Heart left ventricle (tissue), 16 donors: ENCODE measurements at regions of chr19 and their contacts with region 1.

Region 1: DNA sequence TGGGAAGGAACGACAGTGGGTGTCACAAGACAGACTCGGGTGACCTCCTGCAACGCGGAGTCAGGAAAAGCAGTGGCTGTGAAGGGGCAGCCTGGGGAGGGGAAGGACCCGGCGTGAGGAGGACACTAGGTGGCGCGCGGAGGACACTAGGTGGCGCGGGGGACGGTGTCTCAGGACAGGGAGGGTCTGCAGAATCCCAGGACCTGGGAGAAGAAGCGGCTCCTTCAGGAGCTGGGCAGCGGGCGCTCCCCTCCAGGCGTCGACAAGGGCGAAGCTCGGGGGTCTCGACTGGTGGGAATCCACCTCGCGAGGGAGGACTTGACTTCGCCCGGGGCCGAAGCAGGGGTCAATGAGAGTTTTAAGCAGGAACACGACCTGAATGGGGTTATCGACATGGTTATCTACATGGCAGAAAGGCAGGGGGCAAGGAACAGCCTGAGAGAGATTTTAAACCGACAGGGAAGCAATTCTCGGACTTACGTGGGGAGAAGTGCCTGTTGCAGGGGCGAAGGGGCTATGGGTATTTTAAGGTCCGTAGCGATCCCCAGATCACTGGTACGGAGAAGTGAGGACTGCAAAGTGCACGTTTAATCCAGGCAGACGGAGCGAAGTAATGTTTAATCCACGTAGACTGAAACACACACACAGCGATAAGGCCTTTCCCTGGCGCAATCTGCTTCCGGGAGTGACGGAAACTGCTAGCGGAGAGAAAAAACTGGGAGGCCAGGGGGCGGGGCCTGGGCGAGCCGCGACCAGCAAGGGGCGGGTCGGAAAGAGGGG is at the start of gene ZNF616:
- DNase-seq: peak; percentile 93 to 99 (median 98)
- ATAC-seq: peak; percentile 93 to 97 (median 96)
- H3K4me3 ChIP-seq: peak within 1 kb of the TSS; percentile 60 to 93 (median 82)
- H3K27ac ChIP-seq: peak within 1 kb of the TSS; percentile 79 to 97 (median 92)
- H3K4me1 ChIP-seq: peaks cover 0 to 21% (median 14%) of the 10 kb centered on the region in 12 donors
- H3K27me3 ChIP-seq: no peaks in the 10 kb centered on the region
- CTCF ChIP-seq: peak; percentile 58 to 93 (median 84)
- POLR2A ChIP-seq: peak in 1 of 2 donors; percentile 68
- total RNA-seq, gene ZNF616: 1.8 to 10.0 (median 6.7) TPM

Region 2: DNA sequence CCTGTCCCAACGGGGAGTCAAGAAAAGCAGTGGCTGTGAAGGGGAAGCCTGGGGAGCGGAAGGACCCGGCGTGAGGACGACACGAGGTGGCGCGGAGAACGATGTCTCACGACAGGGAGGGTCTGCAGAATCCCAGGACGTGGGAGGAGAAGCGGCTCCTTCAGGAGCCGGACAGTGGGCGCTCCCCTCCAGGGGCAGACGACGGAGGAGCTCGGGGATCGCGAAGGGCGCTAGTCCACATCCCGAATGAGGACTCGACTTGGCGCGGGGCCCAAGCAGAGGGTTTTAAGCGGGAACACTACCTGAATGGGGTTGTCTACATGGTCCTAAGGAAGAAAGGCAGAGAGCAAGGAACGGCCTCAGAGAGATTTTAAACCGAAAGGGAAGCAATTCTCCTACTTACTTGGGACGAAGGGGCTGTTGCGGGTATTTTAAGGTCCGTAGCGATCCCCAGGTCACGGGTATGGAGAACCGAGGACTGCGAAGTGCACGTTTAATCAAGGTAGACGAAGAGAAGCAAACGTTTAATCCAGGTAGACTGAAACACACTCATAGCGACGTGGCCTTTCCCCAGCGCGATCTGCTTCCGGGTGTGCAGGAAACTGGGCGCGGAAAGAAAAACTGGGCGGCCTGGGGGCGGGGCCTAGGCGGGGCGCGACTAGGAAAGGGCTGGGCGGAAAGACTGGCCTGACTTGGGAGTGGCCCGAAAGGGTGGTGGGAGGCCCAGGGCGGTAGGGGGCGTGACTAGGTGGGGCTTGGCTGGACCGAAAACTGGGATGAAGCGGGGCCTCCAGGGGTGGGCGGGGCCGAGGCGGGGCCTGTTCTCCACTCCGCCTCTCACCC is 44.0 kb before region 1 on chr19 and contains the start of gene ZNF841:
- intact Hi-C with region 1: loop called in 1 of 10 experiments (anchors 5 kb)
- DNase-seq: peak; percentile 96 to 98 (median 97)
- ATAC-seq: peak; percentile 99 to 100 (median 100)
- H3K4me3 ChIP-seq: peak within 1 kb of the TSS; percentile 69 to 99 (median 82)
- H3K27ac ChIP-seq: peak within 1 kb of the TSS in 11 of 12 donors; percentile 31 to 87 (median 71)
- H3K4me1 ChIP-seq: peaks cover 0 to 24% (median 15%) of the 10 kb centered on the region in 12 donors
- H3K27me3 ChIP-seq: no peaks in the 10 kb centered on the region
- CTCF ChIP-seq: peak in 5 of 12 donors; percentile 6 to 48 (median 22)
- POLR2A ChIP-seq: peak in 1 of 2 donors; percentile 73
- total RNA-seq, gene ZNF841: 6.8 to 12.9 (median 8.5) TPM

Region 3: DNA sequence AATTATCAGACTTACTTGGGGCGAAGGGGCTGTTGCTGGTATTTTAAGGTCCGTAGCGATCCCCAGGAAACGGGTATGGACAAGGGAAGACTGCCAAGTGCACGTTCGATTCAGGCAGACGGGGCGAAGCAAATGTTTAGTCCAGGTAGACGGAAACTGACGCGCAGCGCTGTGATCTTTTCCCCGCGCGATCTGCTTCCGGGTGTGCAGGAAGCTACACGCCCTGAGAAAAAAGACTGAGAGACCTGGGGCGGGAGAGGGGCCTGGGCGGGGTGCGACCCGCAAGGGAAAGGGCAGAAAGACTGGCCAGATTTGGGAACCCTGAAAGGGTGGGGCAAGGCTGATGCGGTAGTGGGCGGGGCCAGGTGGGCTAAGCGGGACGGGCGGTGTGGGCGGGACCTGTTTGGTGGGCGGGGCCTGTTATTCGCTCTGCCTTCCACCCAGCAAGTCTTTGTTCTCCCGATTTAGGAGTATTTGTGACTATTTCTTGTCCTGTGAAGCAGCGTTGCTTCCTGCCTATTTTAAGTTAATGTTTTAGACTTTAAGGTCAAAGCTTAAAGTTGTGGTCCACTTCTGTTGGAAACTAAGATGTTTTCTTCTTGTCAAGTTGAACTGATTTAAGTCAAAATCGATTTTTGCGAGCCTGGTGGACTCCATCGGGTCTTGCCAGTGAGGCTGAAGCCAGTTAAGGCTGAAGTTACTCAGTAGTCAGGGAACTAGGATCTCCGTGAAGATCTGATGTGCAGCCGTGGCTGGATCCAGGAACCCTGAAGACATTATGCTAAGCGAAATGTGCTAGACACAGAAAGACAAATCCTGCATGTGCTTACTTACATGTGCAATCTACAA is 32.1 kb after region 1 on chr19 and contains the start of gene ZNF836:
- intact Hi-C with region 1: loop called in 3 of 10 experiments (anchors 2 to 5 kb)
- DNase-seq: peak; percentile 92 to 93 (median 93)
- ATAC-seq: peak; percentile 96 to 99 (median 98)
- H3K4me3 ChIP-seq: peak within 1 kb of the TSS; percentile 62 to 94 (median 83)
- H3K27ac ChIP-seq: peak within 1 kb of the TSS; percentile 28 to 92 (median 84)
- H3K4me1 ChIP-seq: peaks cover 0 to 19% (median 11%) of the 10 kb centered on the region in 12 donors
- H3K27me3 ChIP-seq: no peaks in the 10 kb centered on the region
- CTCF ChIP-seq: no peak
- POLR2A ChIP-seq: no peak
- total RNA-seq, gene ZNF836: 4.1 to 11.0 (median 7.3) TPM

Region 4: GRCh38 chr19:52189735-52190486 is 50.5 kb after region 1 on chr19 and contains the start of gene PPP2R1A:
- intact Hi-C with region 1: loop called in 9 of 10 experiments (anchors 1 to 10 kb)
- DNase-seq: peak; percentile 98 to 100 (median 100)
- ATAC-seq: peak; percentile 88 to 97 (median 94)
- H3K4me3 ChIP-seq: peak within 1 kb of the TSS; percentile 55 to 97 (median 90)
- H3K27ac ChIP-seq: peak within 1 kb of the TSS; percentile 95 to 100 (median 98)
- H3K4me1 ChIP-seq: peaks cover 14 to 54% (median 43%) of the 10 kb centered on the region in 12 donors
- H3K27me3 ChIP-seq: no peaks in the 10 kb centered on the region
- CTCF ChIP-seq: peak in 1 of 12 donors; percentile 6
- POLR2A ChIP-seq: peak; percentile 60 to 61
- total RNA-seq, gene PPP2R1A: 345 to 447 (median 370) TPM

Region 5: DNA sequence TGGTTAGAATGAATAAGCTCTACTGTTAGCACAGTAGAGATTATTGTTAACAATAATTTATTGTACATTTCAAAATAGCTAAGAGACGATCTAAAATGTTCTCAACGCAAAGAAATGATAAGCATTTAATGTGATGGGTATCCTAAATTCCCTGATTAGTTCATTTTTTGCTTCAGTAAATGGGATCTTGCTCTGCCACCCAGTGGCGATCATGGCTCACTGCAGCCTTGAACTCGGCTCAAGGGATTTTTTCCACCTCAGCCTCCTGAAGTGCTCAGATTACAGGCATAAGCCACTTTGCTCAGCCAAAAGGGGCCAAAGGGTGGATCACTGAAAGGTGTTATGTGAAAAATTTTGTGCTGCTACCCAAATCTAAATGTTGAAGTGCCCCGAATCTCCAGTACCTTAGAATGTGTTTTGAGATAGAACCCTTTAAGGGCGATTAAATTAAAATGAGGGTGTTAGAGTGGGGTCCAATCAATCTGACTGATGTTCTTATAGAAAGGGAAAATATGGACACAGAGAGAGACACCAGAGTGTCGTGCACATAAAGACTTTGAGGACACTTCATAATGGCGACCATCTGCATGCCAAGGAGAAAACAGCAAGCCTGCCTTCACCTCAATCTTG is 98.4 kb after region 1 on chr19:
- intact Hi-C with region 1: loop called (anchors 1 to 2 kb)
- DNase-seq: peak in 4 of 5 donors; percentile 37 to 61 (median 40)
- ATAC-seq: peak in 3 of 4 donors; percentile 62 to 69 (median 66)
- H3K4me3 ChIP-seq: no peak overlapping the region
- H3K27ac ChIP-seq: no peak overlapping the region
- H3K4me1 ChIP-seq: peaks cover 0 to 6% (median 0%) of the 10 kb centered on the region in 12 donors
- H3K27me3 ChIP-seq: no peaks in the 10 kb centered on the region
- CTCF ChIP-seq: peak; percentile 81 to 97 (median 92)
- POLR2A ChIP-seq: no peak

Region 6: GRCh38 chr19:52258426-52258825 is 119.0 kb after region 1 on chr19:
- intact Hi-C with region 1: no loop called
- DNase-seq: no peak
- ATAC-seq: no peak
- H3K4me3 ChIP-seq: no peak overlapping the region
- H3K27ac ChIP-seq: no peak overlapping the region
- H3K4me1 ChIP-seq: no peaks in the 10 kb centered on the region
- H3K27me3 ChIP-seq: no peaks in the 10 kb centered on the region
- CTCF ChIP-seq: no peak
- POLR2A ChIP-seq: no peak

Region 7: GRCh38 chr19:52748336-52748950 is 609.0 kb after region 1 on chr19:
- intact Hi-C with region 1: loop called in 1 of 10 experiments (anchors 2 kb)
- DNase-seq: no peak
- ATAC-seq: peak in 2 of 4 donors; percentile 46 to 56
- H3K4me3 ChIP-seq: peak overlapping the region in 1 of 12 donors; percentile 19
- H3K27ac ChIP-seq: no peak overlapping the region
- H3K4me1 ChIP-seq: peaks cover 0 to 4% (median 0%) of the 10 kb centered on the region in 12 donors
- H3K27me3 ChIP-seq: no peaks in the 10 kb centered on the region
- CTCF ChIP-seq: peak; percentile 23 to 67 (median 46)
- POLR2A ChIP-seq: no peak